Cardiac septum (tissue), 1 donor: ENCODE measurements at regions of chr6 and their contacts with region 1.

Region 1: GRCh38 chr6:52399511-52400312 is 20.4 kb upstream of the EFHC1 start:
- DNase-seq: no peak

Region 2: GRCh38 chr6:52361945-52362442 is 37.7 kb before region 1 on chr6 and contains the start of gene PAQR8:
- intact Hi-C with region 1: loop called (anchors 5 kb)
- DNase-seq: peak; percentile 86
- total RNA-seq, gene PAQR8: 2.0 TPM

Region 3: GRCh38 chr6:52454556-52454955 is 54.8 kb after region 1 on chr6:
- intact Hi-C with region 1: no loop called
- DNase-seq: no peak

Region 4: DNA sequence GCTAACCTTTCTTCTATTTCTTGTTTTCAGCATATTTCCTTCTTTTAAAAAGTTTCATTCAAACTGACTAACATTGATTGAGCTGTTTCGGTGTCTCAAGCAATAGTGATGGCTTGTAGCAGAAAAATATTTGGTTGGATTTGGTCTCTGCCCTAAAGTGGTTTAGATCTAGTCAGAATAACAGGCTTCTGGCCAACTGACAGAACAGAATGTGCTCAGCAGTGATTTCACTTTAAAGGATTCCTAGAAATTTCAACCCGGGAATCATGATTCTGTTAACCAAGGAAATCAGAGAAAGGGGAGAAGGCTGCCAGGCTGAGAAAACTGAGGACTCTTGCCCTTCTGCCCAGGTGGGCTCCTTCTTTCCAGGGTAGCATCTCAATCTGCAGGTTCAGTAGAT is 420.5 kb after region 1 on chr6:
- intact Hi-C with region 1: no loop called
- DNase-seq: no peak